Dorsolateral prefrontal cortex (tissue), 120 donors: ENCODE measurements at regions of chr2 and their contacts with region 1.

Region 1: GRCh38 chr2:27217217-27218121 is at the start of gene CAD:
- DNase-seq: peak; percentile 73 to 91 (median 88)
- H3K4me3 ChIP-seq: peak within 1 kb of the TSS; percentile 41 to 92 (median 72)
- H3K27ac ChIP-seq: peak within 1 kb of the TSS in 50 of 59 donors; percentile 5 to 84 (median 69)
- H3K27me3 ChIP-seq: no peaks in the 10 kb centered on the region
- CTCF ChIP-seq: peak in 44 of 56 donors; percentile 11 to 59 (median 32)
- total RNA-seq, gene CAD: 18.2 to 44.6 (median 27.8) TPM

Region 2: DNA sequence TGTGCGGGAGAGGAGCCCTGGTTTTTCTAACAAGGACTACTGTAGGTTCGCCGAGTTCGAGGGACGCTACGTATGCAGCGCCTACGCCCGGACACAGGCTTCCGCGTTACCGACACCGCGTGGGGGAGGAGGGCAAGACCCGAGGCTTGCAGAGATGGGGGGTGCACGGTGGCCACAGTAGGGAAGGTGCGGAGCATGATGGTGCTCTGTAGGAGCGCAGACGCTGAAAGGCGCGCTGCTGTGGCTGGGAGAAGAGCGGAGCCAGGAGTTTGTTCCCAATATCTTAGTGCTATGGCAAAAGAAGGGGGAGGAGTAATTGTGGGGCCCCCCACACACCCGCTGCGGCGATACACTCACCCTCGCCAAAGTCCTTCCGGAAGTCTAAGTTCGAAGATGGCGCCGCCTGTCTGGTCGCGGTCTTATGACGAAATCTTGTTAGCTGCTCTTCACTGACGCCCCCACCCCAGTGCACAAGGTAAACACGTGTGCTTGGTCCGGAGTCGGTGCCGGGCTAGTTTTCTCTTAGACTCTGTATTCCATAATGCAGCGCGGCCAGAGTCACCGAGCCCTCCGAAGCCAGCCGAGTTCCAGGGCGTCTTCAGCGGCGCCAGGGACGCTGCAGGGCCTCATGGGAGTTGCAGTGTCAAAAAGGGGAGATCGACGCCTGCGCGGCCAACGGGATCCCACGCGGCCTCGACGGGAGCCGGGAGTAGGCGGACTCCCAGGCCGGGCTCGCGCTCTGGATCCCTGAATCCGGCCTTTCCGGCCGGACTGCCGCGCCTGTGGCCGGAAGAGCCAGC is 139.1 kb after region 1 on chr2 and contains the start of gene GTF3C2:
- intact Hi-C with region 1: loop called in 1 of 2 experiments (anchors 10 kb)
- DNase-seq: peak; percentile 93 to 98 (median 95)
- H3K4me3 ChIP-seq: peak within 1 kb of the TSS; percentile 64 to 100 (median 95)
- H3K27ac ChIP-seq: peak within 1 kb of the TSS; percentile 46 to 97 (median 90)
- H3K27me3 ChIP-seq: no peaks in the 10 kb centered on the region
- CTCF ChIP-seq: peak in 40 of 56 donors; percentile 5 to 61 (median 30)
- total RNA-seq, gene GTF3C2: 37.3 to 76.0 (median 50.6) TPM